ENCODE measurements at regions of chr12 and their contacts with region 1.

Region 1: DNA sequence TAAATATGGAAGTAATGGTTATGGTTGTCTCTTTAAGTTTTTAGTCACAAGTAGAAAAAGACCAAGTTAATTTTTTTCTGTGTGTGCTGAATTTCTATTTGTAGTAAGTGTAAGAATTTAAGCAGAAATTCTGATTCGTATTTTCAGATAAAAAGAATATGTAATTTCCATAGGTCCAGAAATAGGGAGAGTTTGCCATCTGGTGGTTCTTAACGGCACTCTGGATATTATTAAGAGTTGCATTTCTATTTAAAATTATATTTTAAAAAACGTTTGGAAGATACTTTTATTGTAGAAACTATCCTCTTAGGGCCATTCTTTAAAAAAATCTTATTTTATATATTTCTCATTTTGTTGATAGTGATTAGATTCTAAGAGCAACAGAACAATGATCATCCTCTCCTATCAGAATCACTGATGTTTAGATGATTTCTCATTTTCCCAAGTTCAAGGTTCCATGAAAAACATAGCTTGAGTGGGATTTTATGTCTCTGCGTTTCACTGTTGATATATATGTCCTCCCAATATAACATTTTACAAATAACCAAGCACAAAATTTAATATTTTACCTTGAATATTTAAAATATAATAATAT is 88.3 kb downstream of the LRRK2 start:
- DNase-seq: peak; percentile 43
- H3K4me3 ChIP-seq: no peak overlapping the region
- H3K27ac ChIP-seq: no peak overlapping the region
- H3K4me1 ChIP-seq: no peaks in the 10 kb centered on the region
- H3K27me3 ChIP-seq: no peaks in the 10 kb centered on the region
- CTCF ChIP-seq: peak in 1 of 2 donors; percentile 18
- POLR2A ChIP-seq: no peak

Region 2: DNA sequence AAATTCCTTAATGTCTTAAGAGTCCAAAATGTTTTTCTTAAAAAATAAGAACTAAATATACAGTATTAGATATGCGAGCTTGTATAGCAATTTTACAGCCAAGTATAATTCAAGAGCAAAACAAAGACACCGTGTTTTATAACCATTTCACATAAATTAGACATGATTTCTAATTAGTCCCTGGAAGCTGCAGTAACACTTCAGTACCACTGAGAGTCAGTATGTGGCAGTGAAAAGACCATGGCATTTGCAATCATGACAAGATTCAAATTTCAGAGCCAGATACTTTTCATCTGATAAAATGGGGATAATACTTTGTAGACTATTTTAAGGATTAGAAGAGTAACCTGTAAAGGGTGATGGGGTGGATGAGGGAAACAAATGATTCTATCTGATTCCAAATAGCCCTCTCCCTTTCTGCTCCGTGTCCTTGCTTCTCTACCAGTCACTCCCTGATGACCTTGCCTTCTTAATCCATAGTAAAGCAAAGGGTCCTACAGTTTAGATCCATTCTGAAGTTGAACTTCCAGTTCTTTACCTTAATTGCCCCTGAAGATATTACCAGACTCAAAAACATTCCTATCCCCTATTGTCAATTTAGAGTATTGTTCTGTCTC is 548.0 kb before region 1 on chr12:
- CTCF ChIA-PET with region 1: no interaction called
- POLR2A ChIA-PET with region 1: no interaction called
- dilution Hi-C with region 1: no loop called
- intact Hi-C with region 1: loop called (anchors 1 kb)
- DNase-seq: peak; percentile 52
- H3K4me3 ChIP-seq: no peak overlapping the region
- H3K27ac ChIP-seq: no peak overlapping the region
- H3K4me1 ChIP-seq: no peaks in the 10 kb centered on the region
- H3K27me3 ChIP-seq: no peaks in the 10 kb centered on the region
- CTCF ChIP-seq: peak; percentile 59 to 64
- POLR2A ChIP-seq: no peak

Region 3: DNA sequence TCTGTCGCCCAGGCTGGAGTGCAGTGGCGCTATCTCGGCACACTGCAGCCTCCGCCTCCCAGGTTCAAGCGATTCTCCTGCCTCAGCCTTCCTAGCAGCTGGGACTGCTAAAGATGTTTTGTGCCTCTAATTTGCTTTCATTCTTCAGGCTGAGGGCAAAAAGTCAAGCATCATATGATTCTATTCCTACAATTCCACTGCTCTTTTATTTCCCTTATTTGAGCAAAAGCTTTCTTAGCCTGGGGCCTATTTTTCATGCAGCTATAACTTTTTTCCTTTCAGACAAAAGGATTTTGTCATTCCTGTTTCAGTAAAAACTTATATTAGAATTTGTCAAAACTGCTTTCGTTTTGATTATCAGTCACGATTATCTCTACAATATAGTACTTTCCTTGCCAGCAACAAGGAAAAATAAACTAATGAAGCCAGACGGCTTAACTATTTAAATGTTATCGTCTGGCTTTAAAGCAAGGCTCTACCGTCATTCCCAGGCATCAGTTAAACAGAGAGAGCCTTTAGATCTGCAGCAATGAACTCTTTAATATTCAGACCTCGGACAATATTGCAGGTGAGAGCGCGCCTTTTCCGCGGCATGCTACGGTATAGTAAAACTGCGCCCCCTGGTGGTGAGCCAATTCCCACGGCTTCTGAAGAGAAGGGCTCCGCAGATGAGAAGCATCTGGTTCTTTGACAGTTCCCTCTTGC is 205.8 kb before region 1 on chr12:
- CTCF ChIA-PET with region 1: interaction called, 4 read pairs
- POLR2A ChIA-PET with region 1: no interaction called
- dilution Hi-C with region 1: no loop called
- intact Hi-C with region 1: loop called (anchors 1 kb)
- DNase-seq: peak; percentile 72
- H3K4me3 ChIP-seq: peak overlapping the region in 2 of 3 experiments; percentile 17 to 67
- H3K27ac ChIP-seq: no peak overlapping the region
- H3K4me1 ChIP-seq: peaks cover 14% of the 10 kb centered on the region
- H3K27me3 ChIP-seq: no peaks in the 10 kb centered on the region
- CTCF ChIP-seq: peak; percentile 85 to 92
- POLR2A ChIP-seq: no peak

Region 4: DNA sequence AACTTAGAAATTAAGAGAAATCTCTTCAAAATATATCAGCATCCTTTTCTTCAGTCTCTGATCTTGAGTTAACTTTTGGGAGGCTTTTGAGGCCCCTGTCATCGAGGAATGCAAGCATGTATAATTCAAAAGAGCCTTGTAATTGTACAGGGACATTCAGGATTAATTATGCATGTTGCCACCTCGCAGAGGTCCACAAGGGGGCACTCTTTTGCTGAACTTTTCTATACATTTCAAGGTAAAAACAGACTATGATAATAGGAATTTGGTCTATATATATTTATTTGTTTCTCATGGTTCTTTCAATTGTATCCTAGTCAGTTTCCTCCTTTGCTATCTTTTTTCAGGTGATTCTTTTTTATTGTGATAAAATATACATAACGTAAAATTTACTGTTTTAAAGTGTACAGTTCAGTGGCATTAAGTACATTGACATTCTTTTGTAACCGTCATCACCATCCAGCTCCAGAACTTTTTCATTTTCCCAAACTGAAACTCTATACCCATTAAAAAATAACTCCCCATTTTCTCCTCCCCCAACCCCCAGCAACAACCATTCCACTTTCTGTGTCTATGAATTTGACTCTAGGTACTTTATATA is 160.2 kb before region 1 on chr12:
- CTCF ChIA-PET with region 1: interaction called, 85 read pairs
- POLR2A ChIA-PET with region 1: no interaction called
- dilution Hi-C with region 1: no loop called
- intact Hi-C with region 1: loop called (anchors 1 kb)
- DNase-seq: peak; percentile 68
- H3K4me3 ChIP-seq: no peak overlapping the region
- H3K27ac ChIP-seq: no peak overlapping the region
- H3K4me1 ChIP-seq: peaks cover 4% of the 10 kb centered on the region
- H3K27me3 ChIP-seq: no peaks in the 10 kb centered on the region
- CTCF ChIP-seq: peak; percentile 55 to 68
- POLR2A ChIP-seq: no peak

Region 5: GRCh38 chr12:40325349-40325960 is 12.4 kb after region 1 on chr12:
- CTCF ChIA-PET with region 1: interaction called, 12 read pairs
- POLR2A ChIA-PET with region 1: interaction called, 3 read pairs
- dilution Hi-C with region 1: no loop called
- intact Hi-C with region 1: no loop called
- DNase-seq: peak; percentile 27
- H3K4me3 ChIP-seq: no peak overlapping the region
- H3K27ac ChIP-seq: no peak overlapping the region
- H3K4me1 ChIP-seq: no peaks in the 10 kb centered on the region
- H3K27me3 ChIP-seq: no peaks in the 10 kb centered on the region
- CTCF ChIP-seq: peak; percentile 50 to 66
- POLR2A ChIP-seq: no peak

Measured in endothelial cell of umbilical vein (primary cell).